ENCODE measurements at regions of chrX and their contacts with region 1.

Region 1: DNA sequence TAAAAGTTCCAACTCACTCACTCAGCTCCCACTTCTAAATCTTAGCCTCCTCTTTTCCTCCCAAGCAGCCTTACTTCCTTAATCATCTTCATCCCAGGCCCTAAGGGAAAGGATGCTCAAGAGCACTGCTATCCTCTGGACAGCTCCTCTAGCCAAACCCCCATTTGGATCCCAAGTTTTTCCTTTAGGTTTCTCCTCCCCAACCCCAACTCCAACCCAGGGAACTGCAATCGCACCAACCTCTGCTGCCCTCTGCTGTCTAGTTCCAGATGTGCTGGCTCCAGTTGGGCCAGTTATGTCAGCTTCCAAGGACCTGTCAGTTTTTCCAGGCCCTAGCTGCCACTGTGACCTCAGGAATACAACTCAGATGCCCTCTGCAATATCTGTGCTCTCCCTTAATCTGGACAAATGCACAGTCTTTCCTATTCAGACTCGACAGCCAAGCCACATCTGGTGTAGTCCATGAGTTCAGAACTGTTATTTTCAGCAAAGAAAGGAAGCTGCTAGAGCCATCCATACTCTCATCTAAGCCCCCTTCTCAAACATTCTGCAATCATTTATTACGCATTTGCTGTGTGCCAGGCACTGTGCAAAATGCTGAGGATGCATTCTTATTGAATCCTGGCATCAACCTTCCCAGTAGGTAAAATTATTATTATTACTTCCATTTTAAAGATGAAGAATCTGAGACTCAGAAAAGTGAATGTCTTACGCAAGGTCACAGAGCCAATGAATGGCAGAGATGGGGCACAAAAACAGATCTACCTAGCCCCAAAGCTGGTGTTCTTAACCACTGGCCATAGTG is 12.3 kb upstream of the XPNPEP2 start:
- DNase-seq: no peak
- H3K4me3 Mint-ChIP-seq: no peak overlapping the region
- H3K27ac Mint-ChIP-seq: peak overlapping the region; percentile 40
- H3K4me1 Mint-ChIP-seq: peaks cover 49% of the 10 kb centered on the region
- H3K27me3 Mint-ChIP-seq: peaks cover 2% of the 10 kb centered on the region

Region 2: DNA sequence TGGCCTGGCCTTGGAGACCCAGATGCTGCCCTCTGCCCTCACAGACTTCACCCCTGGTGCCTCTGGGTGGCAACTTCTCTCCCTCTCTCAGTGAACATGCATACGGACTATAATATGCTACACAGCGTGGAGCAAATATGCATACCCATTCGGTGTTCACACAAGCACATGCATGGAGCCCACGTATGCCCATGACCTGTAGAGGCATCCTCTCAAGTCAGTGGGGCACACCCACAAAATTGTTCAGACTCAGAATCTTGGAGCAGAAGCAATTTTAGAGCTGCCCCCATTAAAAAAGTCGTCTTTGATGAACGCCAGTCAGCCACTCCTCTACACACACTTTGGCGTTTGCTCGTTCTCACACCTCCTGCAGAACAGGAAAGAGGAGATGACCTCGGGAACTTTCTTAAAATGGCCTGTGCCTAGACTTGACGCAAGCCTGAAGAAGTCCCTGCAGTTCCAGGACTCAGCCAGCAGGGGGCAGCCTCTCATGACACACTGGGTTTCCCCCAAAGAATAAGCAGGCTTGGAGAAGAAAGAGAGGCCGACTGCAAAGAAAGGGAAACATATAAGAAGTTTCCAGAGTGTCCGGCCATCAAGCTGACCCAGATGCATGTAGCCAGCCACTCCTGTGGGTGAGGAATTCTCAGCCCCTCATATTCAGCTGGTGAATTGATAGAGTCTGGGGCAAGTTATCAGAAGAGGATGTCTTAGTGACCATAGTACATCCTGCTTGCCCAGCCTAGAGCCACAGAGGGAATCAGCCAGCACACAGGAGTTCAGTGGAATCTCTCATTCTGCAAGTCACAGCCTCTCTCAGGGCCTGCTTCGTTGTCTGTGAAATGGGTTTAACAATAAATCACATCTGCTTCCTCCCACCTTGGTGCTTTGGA is 89.0 kb before region 1 on chrX:
- intact Hi-C with region 1: loop called (anchors 1 kb)
- DNase-seq: peak; percentile 48
- H3K4me3 Mint-ChIP-seq: no peak overlapping the region
- H3K27ac Mint-ChIP-seq: no peak overlapping the region
- H3K4me1 Mint-ChIP-seq: no peaks in the 10 kb centered on the region
- H3K27me3 Mint-ChIP-seq: no peaks in the 10 kb centered on the region

Measured in activated T-helper 1 cell treated with anti-CD3 and anti-CD28 coated beads, Interleukin-12 subunit alpha, Interleukin-12 subunit beta, Interleukin-2, Interleukin-4 antibody, amounts not matched to agents 30 ng/mL and 10 ng/mL and 1 ng/mL, durations not matched to agents 14 hours and 24 hours and 36 hours (primary cell).